Dendritic cell treated with granulocyte-macrophage colony-stimulating factor and Interleukin-4, amounts not matched to agents 40 ng/mL and 50 ng/mL, for 4 days (primary cell): ENCODE measurements at regions of chr5 and their contacts with region 1.

Region 1: GRCh38 chr5:147576646-147577535 is 67.0 kb upstream of the DPYSL3 start:
- H3K4me3 Mint-ChIP-seq: no peak overlapping the region
- H3K27ac Mint-ChIP-seq: no peak overlapping the region
- H3K4me1 Mint-ChIP-seq: no peaks in the 10 kb centered on the region
- H3K27me3 Mint-ChIP-seq: no peaks in the 10 kb centered on the region

Region 2: DNA sequence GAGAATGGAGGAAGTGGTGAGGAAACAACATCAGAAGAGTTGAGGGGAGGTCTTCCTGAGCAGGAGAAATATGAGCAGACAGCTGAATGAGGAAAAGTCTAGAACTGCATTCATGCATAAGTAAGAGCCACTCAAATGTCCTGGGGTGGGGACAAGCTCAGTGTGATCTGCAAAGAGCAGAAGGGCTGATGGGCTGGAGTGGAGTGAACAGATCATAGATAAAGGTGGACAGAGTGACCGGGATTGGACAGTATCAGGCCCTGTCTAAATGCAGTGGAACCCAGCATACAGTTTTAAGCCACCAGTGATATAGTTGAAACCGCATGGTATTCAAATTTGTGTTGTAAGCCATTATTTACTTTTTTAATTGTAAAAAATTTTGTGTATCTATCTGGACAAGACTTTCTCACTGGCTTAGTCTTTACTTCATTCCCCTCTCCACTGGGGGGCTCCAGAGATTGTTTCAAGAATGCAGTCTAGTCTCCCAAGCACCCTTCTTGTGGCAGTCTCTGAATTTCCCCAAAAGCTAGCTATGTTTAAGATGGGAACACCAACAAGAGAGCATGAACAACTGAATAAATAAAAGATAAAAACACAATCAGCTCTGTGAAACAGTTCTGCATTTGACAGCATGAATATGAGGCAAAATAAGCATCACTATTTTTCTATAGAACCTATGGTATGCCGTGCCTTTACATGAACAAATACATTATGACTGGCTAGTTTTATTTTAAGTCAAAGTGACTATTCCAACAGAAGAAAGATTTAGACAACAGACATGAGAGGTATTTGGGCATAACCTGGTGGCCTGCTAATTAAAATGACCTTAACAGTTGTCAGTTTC is 352.7 kb before region 1 on chr5:
- intact Hi-C with region 1: loop called (anchors 5 kb)
- H3K4me3 Mint-ChIP-seq: no peak overlapping the region
- H3K27ac Mint-ChIP-seq: no peak overlapping the region
- H3K4me1 Mint-ChIP-seq: no peaks in the 10 kb centered on the region
- H3K27me3 Mint-ChIP-seq: no peaks in the 10 kb centered on the region

Region 3: DNA sequence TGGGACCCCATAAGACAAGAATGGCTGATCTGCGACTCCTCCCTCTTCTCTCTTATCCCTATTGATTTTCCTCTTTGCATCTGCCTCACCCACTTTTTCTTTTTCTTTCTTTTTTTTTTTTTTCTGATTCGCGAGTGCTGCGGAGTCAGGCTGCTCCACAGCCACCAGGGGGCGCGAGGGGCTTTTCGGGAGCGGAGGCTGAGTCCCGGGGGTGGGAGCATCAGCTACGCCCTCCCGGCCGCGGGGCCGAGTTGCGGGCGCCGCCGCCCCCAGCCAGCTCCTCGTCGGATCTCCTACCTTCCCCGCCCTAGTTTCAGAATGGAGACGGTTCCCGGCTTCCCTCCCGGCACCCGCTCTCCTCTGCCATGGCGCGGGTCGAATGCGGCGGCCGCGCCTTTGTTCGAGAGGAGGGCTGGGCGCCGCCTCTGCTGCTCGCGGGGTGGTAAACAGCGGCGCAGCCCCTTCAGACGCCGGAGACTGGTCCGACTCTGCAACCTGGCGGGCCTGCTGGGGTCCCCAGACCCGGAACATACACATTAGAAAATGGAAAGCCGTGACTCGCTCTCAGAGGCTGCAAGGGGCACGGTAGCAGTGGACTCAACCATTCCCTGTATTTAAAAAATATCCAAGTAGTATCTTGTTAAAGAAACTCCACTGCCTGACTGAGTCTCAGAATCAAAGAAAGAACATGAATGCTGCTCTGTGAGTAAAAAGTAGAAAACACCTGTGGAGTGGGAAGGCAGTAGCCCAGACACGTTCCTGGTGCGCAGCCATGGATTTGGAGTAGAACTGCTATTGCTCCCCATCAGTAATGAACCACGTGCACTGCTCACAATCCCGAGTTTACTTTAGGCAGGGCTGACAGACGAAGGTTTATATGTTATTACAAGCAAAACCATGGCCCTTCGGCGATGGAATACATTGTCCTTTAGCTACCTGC is 122.7 kb before region 1 on chr5:
- intact Hi-C with region 1: loop called (anchors 1 kb)
- H3K4me3 Mint-ChIP-seq: peak overlapping the region; percentile 96
- H3K27ac Mint-ChIP-seq: peak overlapping the region; percentile 25
- H3K4me1 Mint-ChIP-seq: peaks cover 29% of the 10 kb centered on the region
- H3K27me3 Mint-ChIP-seq: peaks cover 46% of the 10 kb centered on the region

Region 4: GRCh38 chr5:147547730-147548129 is 29.2 kb before region 1 on chr5:
- intact Hi-C with region 1: no loop called
- H3K4me3 Mint-ChIP-seq: no peak overlapping the region
- H3K27ac Mint-ChIP-seq: no peak overlapping the region
- H3K4me1 Mint-ChIP-seq: no peaks in the 10 kb centered on the region
- H3K27me3 Mint-ChIP-seq: no peaks in the 10 kb centered on the region

Region 5: GRCh38 chr5:148556835-148557234 is 979.9 kb after region 1 on chr5:
- intact Hi-C with region 1: no loop called
- H3K4me3 Mint-ChIP-seq: no peak overlapping the region
- H3K27ac Mint-ChIP-seq: no peak overlapping the region
- H3K4me1 Mint-ChIP-seq: no peaks in the 10 kb centered on the region
- H3K27me3 Mint-ChIP-seq: no peaks in the 10 kb centered on the region